BJ (cell line): ENCODE measurements at regions of chr15 and their contacts with region 1.

Region 1: DNA sequence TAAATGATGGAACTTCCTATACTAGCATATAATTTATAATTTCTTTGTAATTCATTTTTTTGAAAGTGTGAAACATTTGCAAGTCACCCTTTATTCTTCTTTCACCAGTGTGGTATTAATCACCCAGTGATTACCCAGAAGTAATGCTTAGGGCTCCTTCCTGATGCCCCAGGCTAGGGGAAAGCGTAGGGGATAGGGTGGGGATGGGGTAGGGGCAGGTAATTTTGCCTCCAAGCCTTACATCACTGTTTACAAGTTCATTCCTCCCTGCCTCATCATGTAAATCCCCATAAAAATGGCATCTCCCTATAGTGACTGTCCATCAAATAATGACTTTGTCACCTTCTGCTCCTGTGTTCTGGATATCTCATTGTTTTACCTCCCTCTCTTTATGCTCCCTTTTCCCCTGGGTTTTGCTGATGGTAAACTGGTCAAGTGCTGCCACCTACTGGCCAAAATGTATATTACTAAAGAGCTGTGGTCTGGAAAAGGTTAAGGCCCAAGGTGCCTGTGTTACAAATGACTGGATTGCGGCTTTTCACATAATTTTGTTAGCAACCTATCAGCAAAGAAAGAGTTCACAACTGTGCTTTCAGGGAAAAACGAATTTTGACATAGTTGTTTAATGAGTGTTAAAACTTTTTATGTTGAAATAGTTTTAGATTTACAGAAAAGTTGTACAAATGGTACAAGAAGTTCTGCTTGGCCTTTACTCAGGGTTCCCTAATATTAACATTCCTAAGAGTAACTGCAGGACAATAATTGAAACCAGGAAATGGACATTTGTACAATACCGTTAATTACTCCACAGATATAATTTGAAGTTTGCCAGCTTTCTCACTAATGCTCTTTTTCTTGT is 54.7 kb downstream of the ONECUT1 start:
- DNase-seq: no peak
- H3K4me3 ChIP-seq: no peak overlapping the region
- H3K27me3 ChIP-seq: no peaks in the 10 kb centered on the region
- CTCF ChIP-seq: peak; percentile 60

Region 2: DNA sequence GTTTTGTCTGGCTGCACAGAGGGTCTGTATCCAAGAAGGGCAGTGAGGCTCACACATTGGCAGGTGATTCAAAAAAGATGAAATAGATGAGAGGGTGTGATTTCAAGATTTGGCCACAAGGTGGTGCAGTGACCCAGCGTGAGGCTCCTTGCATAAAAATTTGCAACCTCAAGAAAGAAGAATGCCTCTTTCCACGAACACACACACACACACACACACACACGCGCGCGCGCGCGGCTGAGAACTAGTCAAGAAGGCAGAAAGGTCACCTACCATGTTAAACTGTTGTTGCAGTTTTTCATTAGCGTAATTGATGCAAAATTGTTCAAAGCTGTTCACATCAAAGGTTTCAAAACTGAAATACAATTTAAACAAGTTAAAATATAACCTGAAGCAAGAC is 479.1 kb before region 1 on chr15:
- CTCF ChIA-PET with region 1: interaction called, 83 read pairs
- POLR2A ChIA-PET with region 1: no interaction called
- DNase-seq: peak; percentile 43
- H3K4me3 ChIP-seq: no peak overlapping the region
- H3K27me3 ChIP-seq: no peaks in the 10 kb centered on the region
- CTCF ChIP-seq: peak; percentile 68

Region 3: GRCh38 chr15:52261498-52262242 is 473.8 kb before region 1 on chr15:
- CTCF ChIA-PET with region 1: interaction called, 83 read pairs
- POLR2A ChIA-PET with region 1: no interaction called
- DNase-seq: peak; percentile 43
- H3K4me3 ChIP-seq: no peak overlapping the region
- H3K27me3 ChIP-seq: no peaks in the 10 kb centered on the region
- CTCF ChIP-seq: peak; percentile 33

Region 4: GRCh38 chr15:52661909-52662308 is 73.6 kb before region 1 on chr15:
- CTCF ChIA-PET with region 1: no interaction called
- POLR2A ChIA-PET with region 1: no interaction called
- DNase-seq: no peak
- H3K4me3 ChIP-seq: no peak overlapping the region
- H3K27me3 ChIP-seq: no peaks in the 10 kb centered on the region
- CTCF ChIP-seq: no peak